PC-9 (cell line): ENCODE measurements at regions of chr10 and their contacts with region 1.

Region 1: DNA sequence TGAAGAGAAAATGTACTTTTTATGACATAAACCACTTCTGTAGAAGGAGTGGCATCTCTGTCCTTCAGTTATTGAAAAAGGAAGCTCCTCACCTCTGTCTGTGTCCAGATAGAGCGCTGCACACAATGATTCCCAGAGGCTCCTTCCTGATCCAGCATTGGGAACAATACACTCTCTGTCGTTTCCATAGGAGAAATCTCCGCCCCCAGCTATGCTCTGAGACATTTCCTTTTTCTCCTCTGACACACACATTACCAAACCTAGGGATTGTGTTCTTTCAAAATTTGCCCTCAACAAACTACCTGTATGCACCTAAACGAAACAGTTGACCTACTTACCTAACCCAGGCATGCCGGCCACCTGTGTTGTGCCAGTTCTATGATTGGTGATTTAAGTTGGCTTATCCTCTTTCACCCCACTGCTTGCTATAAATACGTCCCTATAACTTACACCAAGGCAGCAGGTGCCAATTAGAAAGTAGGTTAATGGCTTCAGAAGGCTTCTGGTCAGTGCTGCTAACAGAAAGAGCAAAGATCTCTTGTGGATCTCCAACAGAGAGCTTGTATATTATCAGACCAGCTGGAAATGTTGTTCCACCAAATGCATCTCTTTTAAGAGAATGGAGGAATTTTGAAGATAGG is 140.1 kb upstream of the JCAD start:
- DNase-seq: no peak
- H3K4me3 ChIP-seq: no peak overlapping the region
- H3K27ac ChIP-seq: no peak overlapping the region
- H3K4me1 ChIP-seq: no peaks in the 10 kb centered on the region; the same call in 1 of the 2 replicates
- H3K27me3 ChIP-seq: no peaks in the 10 kb centered on the region
- CTCF ChIP-seq: no peak

Region 2: GRCh38 chr10:30219971-30220751 is 20.7 kb after region 1 on chr10:
- CTCF ChIA-PET with region 1: interaction called, 10 read pairs
- POLR2A ChIA-PET with region 1: no interaction called
- intact Hi-C with region 1: no loop called
- DNase-seq: peak; percentile 46 to 82
- H3K4me3 ChIP-seq: peak overlapping the region; percentile 48; the same call in 1 of the 2 replicates
- H3K27ac ChIP-seq: peak overlapping the region; percentile 68
- H3K4me1 ChIP-seq: peaks cover 23% of the 10 kb centered on the region
- H3K27me3 ChIP-seq: no peaks in the 10 kb centered on the region
- CTCF ChIP-seq: no peak

Region 3: GRCh38 chr10:30493609-30494530 is 294.4 kb after region 1 on chr10:
- CTCF ChIA-PET with region 1: no interaction called
- POLR2A ChIA-PET with region 1: no interaction called
- intact Hi-C with region 1: no loop called
- DNase-seq: peak; percentile 49 to 63
- H3K4me3 ChIP-seq: no peak overlapping the region
- H3K27ac ChIP-seq: no peak overlapping the region
- H3K4me1 ChIP-seq: peaks cover 46% of the 10 kb centered on the region
- H3K27me3 ChIP-seq: no peaks in the 10 kb centered on the region
- CTCF ChIP-seq: no peak